ENCODE measurements at regions of chr2 and their contacts with region 1.

Region 1: DNA sequence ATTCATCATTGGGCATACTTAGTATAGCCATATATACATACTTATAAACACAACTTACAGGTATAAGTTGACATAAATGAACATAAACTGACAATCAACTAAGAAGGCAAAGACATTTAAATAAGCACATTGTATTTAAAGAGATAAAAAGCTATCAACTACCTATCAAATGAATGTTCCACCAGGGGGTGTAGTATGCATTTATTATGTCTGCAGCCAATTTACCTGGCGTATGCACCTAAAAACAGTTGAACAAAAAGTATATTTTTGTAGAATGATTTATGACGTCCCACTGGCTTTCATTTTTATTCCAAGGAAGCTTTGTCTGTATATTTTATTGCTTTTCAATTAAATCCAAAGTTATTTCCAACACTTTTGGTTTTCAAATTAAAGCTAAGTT is 323.5 kb downstream of the AFF3 start:
- DNase-seq: peak; percentile 57
- H3K4me3 ChIP-seq: no peak overlapping the region
- H3K27ac ChIP-seq: no peak overlapping the region
- H3K4me1 ChIP-seq: peaks cover 3% of the 10 kb centered on the region
- H3K27me3 ChIP-seq: peaks cover 8 to 10% of the 10 kb centered on the region in 2 experiments
- CTCF ChIP-seq: peak; percentile 13 to 25
- POLR2A ChIP-seq: no peak

Region 2: GRCh38 chr2:99861376-99861760 is 42.5 kb after region 1 on chr2:
- CTCF ChIA-PET with region 1: interaction called, 10 read pairs
- POLR2A ChIA-PET with region 1: interaction called, 6 read pairs
- dilution Hi-C with region 1: no loop called
- intact Hi-C with region 1: loop called (anchors 2 kb)
- DNase-seq: peak; percentile 63
- H3K4me3 ChIP-seq: no peak overlapping the region
- H3K27ac ChIP-seq: peak overlapping the region; percentile 82
- H3K4me1 ChIP-seq: peaks cover 30% of the 10 kb centered on the region
- H3K27me3 ChIP-seq: no peaks in the 10 kb centered on the region
- CTCF ChIP-seq: no peak
- POLR2A ChIP-seq: no peak

Region 3: GRCh38 chr2:99974275-99974674 is 155.4 kb after region 1 on chr2:
- CTCF ChIA-PET with region 1: interaction called, 12 read pairs
- POLR2A ChIA-PET with region 1: no interaction called
- dilution Hi-C with region 1: no loop called
- intact Hi-C with region 1: no loop called
- DNase-seq: no peak
- H3K4me3 ChIP-seq: no peak overlapping the region
- H3K27ac ChIP-seq: no peak overlapping the region
- H3K4me1 ChIP-seq: peaks cover 13% of the 10 kb centered on the region
- H3K27me3 ChIP-seq: peaks cover 0 to 1% of the 10 kb centered on the region in 2 experiments
- CTCF ChIP-seq: no peak
- POLR2A ChIP-seq: no peak

Region 4: DNA sequence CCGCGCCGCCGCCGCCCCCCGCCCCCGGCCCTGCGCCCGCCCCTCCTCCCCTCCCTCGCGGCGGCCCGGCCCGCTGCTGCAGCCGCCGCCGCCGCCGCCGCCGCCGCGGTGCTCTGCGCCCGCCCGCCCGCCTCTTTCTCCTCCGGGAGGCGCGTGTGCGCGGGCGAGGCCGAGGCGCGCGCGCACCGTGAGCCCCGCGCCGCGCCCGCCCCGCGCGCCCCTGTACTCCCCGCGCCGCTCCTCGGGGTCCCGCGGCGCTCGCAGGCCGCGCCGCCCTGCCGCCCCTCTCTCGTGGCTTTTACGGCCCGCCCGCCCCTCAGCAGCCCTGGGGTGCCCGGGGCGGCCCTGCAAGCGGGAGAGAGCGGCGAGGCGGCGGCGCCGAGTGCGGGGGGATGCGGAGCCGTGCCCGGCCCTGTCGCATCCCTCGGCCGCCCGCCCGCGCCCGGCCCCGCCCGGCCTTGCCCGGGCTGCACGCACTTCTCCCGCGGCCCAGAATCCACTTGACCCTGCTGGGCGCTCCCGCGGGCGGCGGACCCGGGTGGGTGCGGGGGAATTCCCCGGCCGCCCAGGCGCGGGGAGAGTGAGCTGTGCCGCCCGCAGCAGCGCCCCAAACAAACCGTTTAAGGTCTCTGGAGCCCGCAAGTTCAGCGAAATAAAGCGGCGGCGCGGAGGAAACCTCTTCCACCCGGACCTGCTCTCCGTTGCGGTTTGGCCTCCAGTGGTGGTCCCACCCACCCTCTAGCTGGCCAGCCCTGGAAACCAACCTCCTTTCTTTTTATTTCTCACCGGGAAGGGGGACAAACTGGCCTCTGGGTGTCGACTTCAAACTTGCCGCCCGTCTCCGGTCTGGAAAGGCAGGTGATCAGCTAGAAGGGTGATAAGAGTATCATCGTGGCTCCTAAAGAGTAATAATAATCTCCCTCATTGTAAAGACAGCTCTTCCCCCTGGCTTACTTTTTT is 286.2 kb after region 1 on chr2:
- CTCF ChIA-PET with region 1: interaction called, 13 read pairs
- POLR2A ChIA-PET with region 1: no interaction called
- dilution Hi-C with region 1: no loop called
- intact Hi-C with region 1: no loop called
- DNase-seq: no peak
- H3K4me3 ChIP-seq: peak overlapping the region in 2 of 3 experiments; percentile 12 to 22
- H3K27ac ChIP-seq: no peak overlapping the region
- H3K4me1 ChIP-seq: no peaks in the 10 kb centered on the region
- H3K27me3 ChIP-seq: peaks cover 30 to 40% of the 10 kb centered on the region in 2 experiments
- CTCF ChIP-seq: no peak
- POLR2A ChIP-seq: no peak

Region 5: GRCh38 chr2:100237770-100238169 is 418.9 kb after region 1 on chr2:
- CTCF ChIA-PET with region 1: interaction called, 108 read pairs
- POLR2A ChIA-PET with region 1: no interaction called
- dilution Hi-C with region 1: no loop called
- intact Hi-C with region 1: no loop called
- DNase-seq: no peak
- H3K4me3 ChIP-seq: no peak overlapping the region
- H3K27ac ChIP-seq: no peak overlapping the region
- H3K4me1 ChIP-seq: no peaks in the 10 kb centered on the region
- H3K27me3 ChIP-seq: peaks cover 0 to 3% of the 10 kb centered on the region in 2 experiments
- CTCF ChIP-seq: no peak
- POLR2A ChIP-seq: no peak

Region 6: DNA sequence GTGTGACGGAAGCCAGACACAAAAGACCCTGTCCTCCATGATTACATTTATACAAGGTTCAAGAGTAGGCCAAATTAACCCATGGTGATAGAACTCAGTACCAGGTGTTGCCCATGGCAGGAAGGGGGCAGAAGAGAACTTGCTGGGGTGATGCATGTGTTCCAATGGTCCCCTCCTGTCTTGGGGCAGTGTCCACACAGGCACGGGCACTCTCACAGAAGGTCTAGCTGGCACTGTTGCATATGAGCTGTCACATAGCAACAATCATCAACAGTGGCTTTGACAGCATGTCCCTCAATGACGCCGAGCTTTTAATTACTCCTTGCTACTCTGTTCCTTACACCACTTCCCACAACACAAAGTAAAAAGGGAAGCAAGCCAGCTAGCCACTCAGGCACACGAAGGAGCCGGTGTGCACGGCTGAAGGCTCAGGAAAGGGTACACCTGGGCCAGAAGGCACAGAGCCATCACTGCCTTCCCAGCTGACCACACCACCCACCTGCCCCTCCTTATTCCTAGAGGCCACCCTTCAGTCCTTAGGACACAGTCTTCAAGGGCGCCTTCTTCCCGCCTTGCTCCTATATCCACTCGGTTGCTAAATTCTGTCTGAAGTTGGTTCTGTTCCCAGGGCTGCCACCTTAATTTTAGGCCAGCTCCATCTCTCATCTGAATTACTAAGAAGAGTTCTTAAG is 1212.2 kb after region 1 on chr2:
- CTCF ChIA-PET with region 1: no interaction called
- POLR2A ChIA-PET with region 1: no interaction called
- dilution Hi-C with region 1: no loop called
- intact Hi-C with region 1: no loop called
- DNase-seq: no peak
- H3K4me3 ChIP-seq: no peak overlapping the region
- H3K27ac ChIP-seq: no peak overlapping the region
- H3K4me1 ChIP-seq: no peaks in the 10 kb centered on the region
- H3K27me3 ChIP-seq: no peaks in the 10 kb centered on the region
- CTCF ChIP-seq: no peak
- POLR2A ChIP-seq: no peak

Measured in endothelial cell of umbilical vein (primary cell).